ENCODE measurements at regions of chr3 and their contacts with region 1.

Region 1: DNA sequence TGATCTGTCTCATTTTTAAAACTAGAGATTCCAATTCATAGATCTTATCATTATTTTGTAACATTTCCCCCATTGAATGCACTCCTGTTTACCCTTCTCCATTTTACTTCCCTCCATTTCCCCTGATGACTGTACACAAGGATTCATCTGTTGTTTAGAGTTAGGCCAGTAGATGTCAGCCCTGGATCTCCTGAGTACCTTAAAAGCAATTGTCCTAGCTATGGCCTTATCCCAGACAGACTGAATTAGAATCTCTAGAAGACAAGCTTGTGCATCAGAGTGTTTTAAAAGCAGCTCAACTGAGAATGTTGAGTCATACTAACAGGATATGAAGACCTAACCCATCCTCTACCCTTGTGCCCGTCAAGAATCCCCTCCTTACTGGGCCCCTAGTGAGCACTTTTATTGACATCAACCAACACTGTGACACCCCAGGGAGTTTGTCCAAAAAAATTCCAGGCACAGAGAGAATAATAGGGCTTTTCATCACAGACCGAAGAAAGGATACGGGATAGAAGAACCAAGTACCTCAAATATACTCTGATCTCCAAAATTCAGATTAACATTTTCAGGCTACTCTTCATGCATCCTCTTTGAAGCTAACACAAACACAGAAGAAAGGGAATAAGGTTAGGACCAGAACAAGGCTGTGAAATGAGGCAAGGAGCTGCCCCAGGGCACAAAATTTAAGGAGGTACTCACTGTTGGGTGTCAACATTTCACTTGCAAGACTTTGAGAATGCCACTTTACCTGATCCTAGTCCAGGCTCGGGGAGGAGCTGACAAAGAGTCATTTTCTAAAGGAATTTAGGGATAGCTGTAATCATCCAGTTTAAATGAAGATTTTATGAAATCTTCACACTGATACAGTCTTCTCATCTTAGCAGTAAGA is 17.1 kb downstream of the ZBED2 start:
- DNase-seq: peak; percentile 16
- ATAC-seq: peak; percentile 92
- H3K4me3 ChIP-seq: no peak overlapping the region
- H3K27ac ChIP-seq: no peak overlapping the region
- H3K4me1 ChIP-seq: no peaks in the 10 kb centered on the region
- H3K27me3 ChIP-seq: no peaks in the 10 kb centered on the region
- CTCF ChIP-seq: peak; percentile 56
- EP300 ChIP-seq: no peak
- POLR2A ChIP-seq: no peak
- RAD21 ChIP-seq: no peak

Region 2: DNA sequence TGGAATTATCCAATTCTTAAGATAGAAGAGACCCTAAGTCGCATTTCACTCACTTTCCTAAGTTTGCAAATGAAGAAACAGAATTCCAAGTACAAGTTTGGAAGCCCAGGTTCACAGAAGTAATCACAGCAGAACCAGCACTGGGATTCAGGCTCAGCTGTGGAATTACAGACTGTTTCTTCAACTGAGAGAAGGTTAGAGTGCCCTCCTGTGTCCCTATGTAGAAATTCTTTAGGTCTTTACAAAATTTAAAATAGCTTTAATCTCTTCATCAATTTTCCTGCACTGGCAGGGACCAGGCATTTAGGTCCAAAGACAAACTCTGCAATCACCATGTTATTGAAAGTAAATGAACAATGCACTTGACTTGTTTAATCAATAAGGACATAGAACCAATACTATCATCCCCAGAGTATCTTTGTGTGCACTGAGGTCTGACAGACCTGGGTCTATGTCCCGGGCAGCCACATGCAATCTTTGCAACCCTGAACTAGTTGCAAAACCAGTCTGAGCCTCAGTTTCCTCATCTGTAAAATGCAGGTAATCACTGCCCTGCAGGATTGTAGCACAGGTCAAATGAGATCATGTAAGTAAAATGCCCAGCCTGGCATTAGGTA is 113.4 kb after region 1 on chr3:
- CTCF ChIA-PET with region 1: no interaction called
- POLR2A ChIA-PET with region 1: no interaction called
- in situ Hi-C with region 1: no loop called
- intact Hi-C with region 1: loop called (anchors 1 kb)
- DNase-seq: peak; percentile 51
- ATAC-seq: peak; percentile 91
- H3K4me3 ChIP-seq: no peak overlapping the region
- H3K27ac ChIP-seq: no peak overlapping the region
- H3K4me1 ChIP-seq: peaks cover 11% of the 10 kb centered on the region
- H3K27me3 ChIP-seq: no peaks in the 10 kb centered on the region
- CTCF ChIP-seq: peak; percentile 63
- EP300 ChIP-seq: no peak
- POLR2A ChIP-seq: no peak
- RAD21 ChIP-seq: peak; percentile 50

Region 3: GRCh38 chr3:112013058-112013783 is 435.2 kb after region 1 on chr3:
- CTCF ChIA-PET with region 1: no interaction called
- POLR2A ChIA-PET with region 1: no interaction called
- in situ Hi-C with region 1: no loop called
- intact Hi-C with region 1: loop called (anchors 10 kb)
- DNase-seq: peak; percentile 49
- ATAC-seq: peak; percentile 97
- H3K4me3 ChIP-seq: peak overlapping the region; percentile 46 to 74 (median 53); a peak in 5 of 6 replicates
- H3K27ac ChIP-seq: no peak overlapping the region
- H3K4me1 ChIP-seq: peaks cover 17% of the 10 kb centered on the region
- H3K27me3 ChIP-seq: peaks cover 0 to 5% of the 10 kb centered on the region in 2 experiments; a peak in 1 of 5 replicates
- CTCF ChIP-seq: peak; percentile 81
- EP300 ChIP-seq: no peak
- POLR2A ChIP-seq: no peak
- RAD21 ChIP-seq: peak; percentile 57

Measured in HepG2 (cell line).